ENCODE measurements at regions of chr3 and their contacts with region 1.

Region 1: DNA sequence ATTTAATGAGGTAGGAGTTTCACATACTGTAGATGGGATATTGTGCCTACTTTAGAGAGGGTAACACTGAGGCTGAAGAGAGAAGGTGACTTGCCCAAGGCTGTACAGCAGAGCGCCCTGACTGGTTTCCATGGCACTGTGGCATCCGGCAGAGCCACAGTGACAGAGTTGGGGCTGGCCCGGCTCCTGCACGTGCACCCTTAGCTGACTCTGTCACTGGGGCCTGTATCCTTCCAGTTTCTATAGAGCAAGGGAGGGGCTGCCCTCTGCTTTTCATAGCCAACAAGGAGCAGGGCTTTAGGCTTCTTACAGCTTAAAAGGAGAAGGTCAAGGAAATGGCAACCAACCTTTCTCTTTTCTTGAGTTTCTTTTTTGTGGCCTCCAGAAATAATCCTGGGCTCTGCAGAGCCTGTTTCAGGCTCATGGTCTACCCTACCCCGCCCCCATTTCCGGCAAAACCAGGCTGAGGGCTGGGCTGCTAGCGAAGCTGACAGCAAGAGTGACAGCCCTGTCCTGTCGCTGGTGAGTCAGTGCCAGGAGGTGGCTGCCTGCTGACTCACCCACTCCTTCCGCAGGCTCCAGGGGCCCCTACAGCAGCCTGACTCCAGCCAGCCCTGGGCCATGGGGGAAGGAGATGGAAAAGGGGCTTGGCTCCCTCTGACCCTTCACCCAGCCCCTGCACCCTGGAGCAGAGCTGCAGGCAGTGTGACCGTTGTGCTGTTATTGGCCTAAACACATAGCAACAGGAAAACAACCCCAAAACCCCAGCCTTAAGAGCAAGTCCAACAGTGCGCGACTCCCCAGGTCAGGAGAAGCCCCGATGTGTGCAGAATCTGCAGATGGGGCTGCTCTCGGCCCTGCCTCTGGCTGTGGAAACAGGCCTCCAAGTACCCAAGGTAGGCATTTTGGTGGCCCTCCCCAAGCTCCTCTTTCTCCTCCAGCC is 29.8 kb downstream of the SLC6A6 start:
- DNase-seq: peak; percentile 92 to 94
- H3K4me3 ChIP-seq: no peak overlapping the region
- H3K27ac ChIP-seq: peak overlapping the region; percentile 77
- H3K4me1 ChIP-seq: peaks cover 88% of the 10 kb centered on the region
- H3K27me3 ChIP-seq: no peaks in the 10 kb centered on the region
- CTCF ChIP-seq: no peak

Region 2: DNA sequence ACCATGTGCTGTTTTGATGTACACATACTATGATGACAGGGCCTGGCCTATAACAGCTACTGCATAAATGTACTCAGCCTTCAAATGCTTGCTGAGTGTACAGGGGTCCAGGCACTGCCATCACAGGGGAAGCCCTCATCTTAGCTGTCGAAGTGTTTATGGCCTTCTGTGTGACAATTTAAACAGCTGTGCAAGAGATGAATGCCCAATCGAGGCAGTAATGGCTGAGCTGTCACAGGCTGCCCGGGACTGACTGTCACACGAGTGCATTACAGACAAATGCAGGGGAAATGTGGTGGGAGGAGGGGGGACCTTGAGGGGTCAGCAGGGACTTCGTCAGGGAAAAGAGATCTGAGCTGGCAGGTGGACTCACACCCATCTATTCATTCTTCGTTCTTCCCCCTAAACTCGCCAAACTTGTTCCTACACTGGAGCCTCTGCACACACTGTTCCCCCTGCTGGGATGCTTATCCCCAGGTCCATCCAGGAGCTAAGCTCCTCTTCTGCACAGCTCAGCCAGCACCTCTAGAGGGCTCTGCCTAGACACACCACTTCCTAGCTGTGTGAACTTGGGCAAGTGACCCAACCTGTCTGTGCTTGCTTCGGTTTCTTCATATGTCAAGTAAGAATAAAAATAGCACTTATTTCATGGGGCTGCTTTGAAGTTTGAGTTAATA is 1202.8 kb before region 1 on chr3:
- CTCF ChIA-PET with region 1: no interaction called
- POLR2A ChIA-PET with region 1: no interaction called
- intact Hi-C with region 1: no loop called
- DNase-seq: peak; percentile 52 to 81
- H3K4me3 ChIP-seq: no peak overlapping the region
- H3K27ac ChIP-seq: no peak overlapping the region
- H3K4me1 ChIP-seq: peaks cover 12% of the 10 kb centered on the region
- H3K27me3 ChIP-seq: no peaks in the 10 kb centered on the region
- CTCF ChIP-seq: peak; percentile 68

Region 3: DNA sequence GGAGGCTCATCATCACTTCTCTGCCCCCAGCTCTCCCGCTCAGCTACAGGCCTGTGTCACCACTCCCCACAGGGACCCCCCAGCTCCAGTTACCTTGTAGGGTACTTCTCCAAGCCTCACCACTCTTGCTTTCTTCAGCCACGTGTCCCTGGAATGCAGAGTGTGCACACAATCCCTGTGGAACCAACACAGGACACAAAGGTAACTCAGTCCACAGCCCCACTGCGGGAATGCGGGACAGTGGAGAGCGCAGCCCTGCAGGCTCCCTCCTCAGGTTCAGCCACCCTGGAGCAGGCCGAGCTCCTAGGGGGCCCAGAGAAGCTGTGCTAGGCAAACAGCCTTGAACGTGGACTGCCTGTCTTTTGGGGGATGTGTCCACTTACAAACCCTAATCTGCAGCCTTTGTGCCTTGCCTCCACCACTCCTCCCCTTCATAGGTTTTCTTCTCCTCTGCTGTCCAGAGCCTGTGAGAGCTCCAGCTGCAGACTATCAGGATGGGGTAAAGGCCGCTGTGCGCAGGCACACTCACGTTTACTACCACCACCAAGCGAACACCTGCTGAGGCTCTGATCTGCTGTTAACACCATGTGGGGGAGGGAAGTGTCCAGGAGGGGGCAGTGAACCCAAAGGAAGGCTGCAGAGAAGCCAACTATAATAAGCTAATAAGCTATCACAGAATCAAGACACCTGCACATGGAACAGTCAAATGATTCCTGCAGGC is 279.8 kb before region 1 on chr3:
- CTCF ChIA-PET with region 1: no interaction called
- POLR2A ChIA-PET with region 1: no interaction called
- intact Hi-C with region 1: no loop called
- DNase-seq: no peak
- H3K4me3 ChIP-seq: no peak overlapping the region
- H3K27ac ChIP-seq: no peak overlapping the region
- H3K4me1 ChIP-seq: no peaks in the 10 kb centered on the region
- H3K27me3 ChIP-seq: no peaks in the 10 kb centered on the region
- CTCF ChIP-seq: peak; percentile 53; the same call in 1 of the 2 replicates

Region 4: DNA sequence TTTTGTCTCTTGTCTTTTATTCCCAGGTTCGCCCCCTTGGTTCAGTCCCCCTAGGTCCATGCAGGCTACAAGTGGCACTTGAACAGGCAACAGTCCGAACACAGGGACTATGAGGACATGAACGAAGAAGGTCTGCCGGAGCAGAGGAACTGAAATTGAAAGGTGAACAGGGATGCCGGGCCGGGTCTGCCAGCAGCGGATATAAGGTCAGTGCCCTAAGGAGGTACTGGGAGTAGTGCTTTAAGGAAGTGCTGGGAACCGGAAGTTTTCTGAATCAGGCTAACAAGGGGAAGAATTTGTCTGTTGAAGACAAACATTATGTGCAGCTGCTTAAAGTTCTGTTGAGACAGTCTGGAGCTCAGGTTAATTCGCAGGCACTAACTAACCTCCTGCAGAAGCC is 206.7 kb before region 1 on chr3:
- CTCF ChIA-PET with region 1: no interaction called
- POLR2A ChIA-PET with region 1: no interaction called
- intact Hi-C with region 1: loop called (anchors 1 kb)
- DNase-seq: peak in 1 of 2 experiments; percentile 80
- H3K4me3 ChIP-seq: peak overlapping the region; percentile 49; the same call in 1 of the 2 replicates
- H3K27ac ChIP-seq: peak overlapping the region; percentile 86
- H3K4me1 ChIP-seq: peaks cover 82% of the 10 kb centered on the region
- H3K27me3 ChIP-seq: no peaks in the 10 kb centered on the region
- CTCF ChIP-seq: no peak

Region 5: DNA sequence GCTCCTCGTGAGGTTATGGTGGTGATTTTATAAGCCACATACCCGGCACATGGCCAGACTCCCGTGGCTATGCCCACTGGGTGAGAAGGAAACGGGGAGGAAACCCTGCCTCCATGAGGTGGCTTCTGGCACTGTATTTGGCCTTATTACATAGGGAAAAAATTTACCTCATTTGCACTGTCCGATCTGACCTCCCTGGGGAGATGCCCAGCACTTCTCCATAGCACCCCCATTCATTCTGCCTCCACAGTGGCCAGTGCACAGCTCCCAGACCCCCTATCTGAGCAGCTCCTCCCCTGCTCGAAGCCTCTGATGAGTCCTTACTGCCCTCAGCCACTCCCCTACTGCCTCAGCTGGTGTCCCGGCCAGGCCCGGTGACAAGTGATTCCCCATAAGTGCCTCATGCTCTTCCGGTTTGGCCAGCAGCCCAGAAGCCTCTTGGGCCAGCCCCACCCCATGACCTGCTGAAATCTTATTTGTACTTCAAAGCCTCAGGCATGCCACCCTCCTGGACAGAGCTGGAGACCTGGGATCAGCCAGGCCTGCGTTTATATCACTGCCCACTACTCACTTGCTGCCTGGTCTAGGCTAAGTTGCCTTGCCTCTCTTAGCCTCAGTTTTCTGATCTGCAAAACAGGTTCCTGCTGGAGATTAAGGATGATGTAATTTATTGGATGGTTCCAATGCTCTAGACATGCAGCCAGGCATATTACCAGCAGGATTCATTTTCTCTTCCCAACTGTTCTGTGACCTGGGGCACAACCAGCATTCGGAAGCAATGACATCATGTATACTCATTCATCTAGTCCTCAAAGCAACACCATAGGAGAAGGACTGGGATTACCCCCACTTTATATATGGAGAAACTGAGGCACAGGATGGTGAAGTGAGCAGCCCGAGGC is 60.3 kb before region 1 on chr3:
- CTCF ChIA-PET with region 1: no interaction called
- POLR2A ChIA-PET with region 1: no interaction called
- intact Hi-C with region 1: loop called (anchors 5 kb)
- DNase-seq: peak; percentile 90 to 93
- H3K4me3 ChIP-seq: no peak overlapping the region
- H3K27ac ChIP-seq: peak overlapping the region; percentile 62
- H3K4me1 ChIP-seq: peaks cover 54% of the 10 kb centered on the region
- H3K27me3 ChIP-seq: no peaks in the 10 kb centered on the region
- CTCF ChIP-seq: no peak; the same call in 1 of the 2 replicates

Region 6: DNA sequence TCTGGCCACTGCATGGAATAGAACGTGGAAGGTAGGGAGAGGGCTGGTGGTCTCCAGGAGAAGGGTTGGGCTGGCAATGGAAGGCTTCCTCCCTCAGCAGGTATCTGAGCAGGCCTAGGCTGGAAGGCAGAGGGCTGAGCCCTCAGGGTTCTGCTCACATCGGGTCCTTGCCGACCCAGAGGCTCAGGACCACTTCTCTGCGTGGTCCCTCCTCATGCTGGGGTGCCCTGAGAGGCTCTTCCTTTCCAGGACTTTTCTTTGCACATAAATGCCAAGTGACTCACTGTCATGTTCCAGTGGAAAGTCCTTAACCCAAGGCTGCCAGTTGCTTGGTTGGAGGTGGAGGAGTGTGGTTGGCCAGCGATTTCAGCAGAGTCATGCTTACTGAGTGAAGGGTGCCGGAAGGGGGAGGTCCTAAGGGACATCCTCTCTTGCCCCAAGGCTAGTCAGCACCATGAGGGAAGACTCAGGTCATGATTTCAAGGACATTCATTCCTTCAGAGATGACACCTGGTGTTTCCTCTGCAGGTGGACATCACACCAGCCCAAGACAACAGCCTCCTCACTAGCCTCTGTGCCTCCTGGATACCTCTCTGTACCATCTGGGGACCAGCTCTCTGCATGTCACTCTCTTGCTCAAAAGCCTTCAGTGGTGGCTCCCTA is 21.5 kb before region 1 on chr3:
- CTCF ChIA-PET with region 1: interaction called, 4 read pairs
- POLR2A ChIA-PET with region 1: no interaction called
- intact Hi-C with region 1: loop called (anchors 1 kb)
- DNase-seq: peak; percentile 90 to 93
- H3K4me3 ChIP-seq: peak overlapping the region; percentile 32; the same call in 1 of the 2 replicates
- H3K27ac ChIP-seq: peak overlapping the region; percentile 99
- H3K4me1 ChIP-seq: peaks cover 99% of the 10 kb centered on the region
- H3K27me3 ChIP-seq: no peaks in the 10 kb centered on the region
- CTCF ChIP-seq: no peak

Region 7: DNA sequence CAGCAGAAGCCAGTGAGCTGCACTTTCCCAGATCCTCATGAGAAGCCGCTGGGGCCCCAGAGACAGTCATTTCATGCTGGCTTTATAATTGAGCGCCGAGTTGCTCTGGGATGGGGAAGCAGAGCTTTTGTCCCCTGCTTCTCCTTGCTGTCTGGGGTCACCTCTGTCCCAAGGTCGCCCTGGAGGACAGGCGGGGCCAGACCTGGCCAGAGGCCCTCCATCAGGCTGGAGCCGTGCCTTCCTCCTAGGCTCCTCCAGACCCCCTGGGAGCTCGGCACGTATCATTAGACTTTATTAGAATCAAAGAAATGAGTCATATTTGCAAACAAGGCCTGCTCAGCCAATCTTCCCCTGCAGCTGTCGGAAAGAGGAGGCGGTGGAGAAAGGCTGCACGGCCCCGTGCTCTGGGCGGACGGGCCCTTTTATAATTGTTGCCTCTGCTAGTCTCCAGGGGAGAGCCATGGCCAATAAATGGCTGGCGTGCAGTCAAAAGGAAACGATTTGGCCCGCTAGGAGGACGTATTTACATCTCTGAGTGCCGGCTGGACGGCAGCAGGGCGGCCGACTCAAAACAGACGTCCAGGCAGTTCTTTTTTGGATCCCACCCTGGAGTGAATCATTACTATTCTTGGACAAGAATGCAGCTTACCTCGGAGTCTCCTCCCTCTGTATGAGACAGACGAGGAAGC is 20.7 kb after region 1 on chr3:
- CTCF ChIA-PET with region 1: no interaction called
- POLR2A ChIA-PET with region 1: no interaction called
- intact Hi-C with region 1: loop called (anchors 2 kb)
- DNase-seq: peak; percentile 71 to 85
- H3K4me3 ChIP-seq: no peak overlapping the region
- H3K27ac ChIP-seq: peak overlapping the region; percentile 72
- H3K4me1 ChIP-seq: peaks cover 29% of the 10 kb centered on the region
- H3K27me3 ChIP-seq: no peaks in the 10 kb centered on the region
- CTCF ChIP-seq: 0 out of 2 replicates have a peak, but pooled peaks have one; percentile 13